HEK293 (cell line): ENCODE measurements at regions of chr12 and their contacts with region 1.

Region 1: GRCh38 chr12:122793685-122794106 is 19.3 kb downstream of the CCDC62 start:
- H3K4me3 ChIP-seq: no peak overlapping the region
- H3K27ac ChIP-seq: no peak overlapping the region
- H3K4me1 ChIP-seq: no peaks in the 10 kb centered on the region
- CTCF ChIP-seq: no peak; the same call in 1 of the 2 replicates

Region 2: GRCh38 chr12:122584177-122584780 is 209.4 kb before region 1 on chr12:
- CTCF ChIA-PET with region 1: no interaction called
- POLR2A ChIA-PET with region 1: no interaction called
- H3K4me3 ChIP-seq: no peak overlapping the region
- H3K27ac ChIP-seq: no peak overlapping the region
- H3K4me1 ChIP-seq: no peaks in the 10 kb centered on the region
- CTCF ChIP-seq: no peak

Region 3: DNA sequence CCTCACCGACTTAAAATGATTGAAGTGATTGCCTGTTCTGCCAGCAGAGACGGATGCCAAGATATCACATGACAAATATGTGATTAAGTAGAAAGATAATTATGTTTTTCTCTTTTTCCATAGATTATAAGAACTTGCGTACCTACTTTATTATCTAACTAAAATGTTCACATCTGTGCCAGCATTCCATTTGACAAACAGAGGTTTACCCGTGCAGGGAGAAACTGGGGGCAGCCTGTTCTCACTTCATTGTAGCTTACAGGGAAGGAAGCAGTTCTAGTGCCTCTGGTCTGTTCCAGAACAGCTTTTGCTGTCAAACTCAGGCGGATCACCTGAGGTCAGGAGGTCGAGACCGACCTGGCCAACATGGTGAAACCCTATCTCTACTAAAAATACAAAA is 10.2 kb after region 1 on chr12:
- CTCF ChIA-PET with region 1: interaction called, 39 read pairs
- POLR2A ChIA-PET with region 1: interaction called, 6 read pairs
- H3K4me3 ChIP-seq: no peak overlapping the region
- H3K27ac ChIP-seq: no peak overlapping the region
- H3K4me1 ChIP-seq: no peaks in the 10 kb centered on the region
- CTCF ChIP-seq: no peak

Region 4: DNA sequence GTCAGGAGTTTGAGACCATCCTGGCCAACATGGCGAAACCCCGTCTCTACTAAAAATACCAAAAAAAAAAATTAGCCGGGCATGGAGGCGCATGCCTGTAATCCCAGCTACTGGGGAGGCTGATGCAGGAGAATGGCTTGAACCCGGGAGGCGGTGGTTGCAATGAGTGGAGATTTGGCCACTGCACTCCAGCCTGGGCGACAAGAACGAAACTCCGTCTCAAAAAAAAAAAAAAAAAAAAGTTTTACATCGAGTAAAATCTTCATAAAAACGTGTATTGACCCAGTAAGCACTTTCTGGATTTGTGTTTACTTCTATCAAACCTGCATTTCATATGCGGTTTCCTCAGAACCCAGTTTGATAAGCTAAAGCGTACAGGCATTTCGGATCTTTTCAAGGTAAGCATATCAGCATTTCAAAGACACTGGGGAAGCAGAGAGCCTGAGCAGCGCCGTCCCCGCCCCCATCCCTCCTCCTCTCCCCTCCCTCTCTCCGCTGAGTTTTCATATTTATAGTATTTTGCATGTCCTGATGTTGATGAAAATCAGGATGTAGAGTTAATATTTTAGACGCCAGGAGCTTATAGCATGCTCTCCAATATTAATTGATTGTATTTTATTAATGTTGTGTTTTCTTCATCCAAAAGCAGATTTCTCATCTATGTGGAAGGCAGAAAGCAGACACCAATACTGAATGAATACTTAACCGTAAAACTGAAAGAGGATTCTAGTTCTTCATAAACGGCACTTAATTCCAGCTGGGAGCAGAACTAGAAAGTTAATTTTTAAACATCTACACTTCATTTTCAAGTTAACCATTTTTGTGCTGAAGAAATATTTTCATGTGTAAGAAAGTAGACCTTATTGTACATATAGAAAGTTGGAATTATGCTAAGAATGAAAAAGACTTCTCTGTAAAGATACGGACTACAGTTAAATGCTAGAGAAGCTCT is 32.4 kb after region 1 on chr12:
- CTCF ChIA-PET with region 1: interaction called, 35 read pairs
- POLR2A ChIA-PET with region 1: no interaction called
- H3K4me3 ChIP-seq: peak overlapping the region; percentile 36
- H3K27ac ChIP-seq: no peak overlapping the region
- H3K4me1 ChIP-seq: peaks cover 10% of the 10 kb centered on the region
- CTCF ChIP-seq: no peak

Region 5: GRCh38 chr12:122834104-122834920 is 40.6 kb after region 1 on chr12:
- CTCF ChIA-PET with region 1: interaction called, 12 read pairs
- POLR2A ChIA-PET with region 1: no interaction called
- H3K4me3 ChIP-seq: peak overlapping the region; percentile 69
- H3K27ac ChIP-seq: peak overlapping the region; percentile 34; the same call in 1 of the 2 replicates
- H3K4me1 ChIP-seq: peaks cover 9% of the 10 kb centered on the region
- CTCF ChIP-seq: peak; percentile 44; the same call in 1 of the 2 replicates

Region 6: DNA sequence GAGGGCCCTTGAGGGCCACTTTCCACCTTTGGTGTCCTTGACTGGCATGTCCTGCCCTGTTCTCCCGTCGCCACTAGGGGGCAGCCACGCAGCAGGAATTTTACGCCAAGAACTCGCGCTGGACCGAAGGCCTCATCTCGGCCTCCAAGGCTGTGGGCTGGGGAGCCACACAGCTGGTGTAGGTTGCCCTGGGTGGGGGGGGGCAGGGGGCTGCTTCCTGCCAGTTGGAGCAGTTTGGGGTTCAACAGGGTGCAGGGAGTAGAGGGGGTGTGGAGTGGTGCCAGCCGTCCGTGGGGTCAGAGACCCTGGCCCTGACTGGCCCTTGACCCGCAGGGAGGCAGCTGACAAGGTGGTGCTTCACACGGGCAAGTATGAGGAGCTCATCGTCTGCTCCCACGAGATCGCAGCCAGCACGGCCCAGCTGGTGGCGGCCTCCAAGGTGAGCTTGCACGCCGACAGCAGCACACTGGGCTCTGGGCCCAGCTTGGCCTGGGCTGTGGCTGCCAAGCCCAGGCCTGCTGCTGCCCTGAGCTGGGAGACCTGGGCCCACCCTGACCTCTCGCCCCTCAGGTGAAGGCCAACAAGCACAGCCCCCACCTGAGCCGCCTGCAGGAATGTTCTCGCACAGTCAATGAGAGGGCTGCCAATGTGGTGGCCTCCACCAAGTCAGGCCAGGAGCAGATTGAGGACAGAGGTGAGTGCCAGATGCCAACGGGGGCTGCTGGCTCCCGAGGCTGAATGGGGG is 66.8 kb after region 1 on chr12:
- CTCF ChIA-PET with region 1: interaction called, 18 read pairs
- POLR2A ChIA-PET with region 1: no interaction called
- H3K4me3 ChIP-seq: no peak overlapping the region
- H3K27ac ChIP-seq: no peak overlapping the region
- H3K4me1 ChIP-seq: no peaks in the 10 kb centered on the region
- CTCF ChIP-seq: peak; percentile 86

Region 7: GRCh38 chr12:122951979-122952892 is 158.5 kb after region 1 on chr12:
- CTCF ChIA-PET with region 1: interaction called, 13 read pairs
- POLR2A ChIA-PET with region 1: no interaction called
- H3K4me3 ChIP-seq: no peak overlapping the region
- H3K27ac ChIP-seq: no peak overlapping the region
- H3K4me1 ChIP-seq: no peaks in the 10 kb centered on the region
- CTCF ChIP-seq: peak; percentile 90